ENCODE measurements at regions of chr17 and their contacts with region 1.

Region 1: DNA sequence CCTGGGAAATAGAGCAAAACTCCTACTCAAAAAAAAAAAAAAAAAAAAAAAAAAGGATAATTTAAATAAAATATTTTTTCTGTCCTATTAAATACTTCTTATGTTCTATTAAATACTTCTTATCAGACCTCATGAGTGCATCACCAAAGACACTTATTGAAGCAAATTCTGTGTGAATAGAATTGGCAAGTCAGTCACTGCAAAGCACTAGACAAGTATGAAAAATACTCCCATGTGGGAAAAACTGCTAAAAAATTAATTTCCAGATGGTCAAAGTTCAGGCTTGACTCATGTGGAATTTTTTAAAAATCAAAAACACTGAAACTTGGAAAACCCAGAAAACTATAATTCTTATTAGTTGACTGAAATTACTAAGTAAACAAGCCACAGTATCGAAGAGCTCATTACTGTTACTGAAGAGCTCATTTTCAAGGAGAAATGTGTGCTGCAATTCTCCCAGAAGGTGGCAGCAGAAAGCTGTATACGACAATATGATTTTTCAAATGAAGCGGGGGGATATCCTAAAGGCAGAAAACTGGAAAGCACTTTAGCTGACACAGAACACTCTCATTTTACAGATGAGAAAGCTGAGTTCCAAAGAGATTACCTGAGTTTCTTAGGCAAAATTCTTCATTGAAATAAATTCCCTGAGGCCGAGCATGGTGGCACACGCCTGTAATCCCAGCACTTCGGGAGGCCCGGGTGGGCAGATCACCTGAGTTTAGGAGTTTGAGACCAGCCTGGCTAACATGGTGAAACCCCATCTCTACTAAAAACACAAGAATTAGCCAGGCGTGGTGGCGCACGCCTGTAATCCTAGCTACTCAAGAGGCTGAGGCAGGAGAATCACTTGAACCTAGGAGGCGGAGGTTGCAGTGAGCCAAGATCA is 15.9 kb upstream of the FBXO47 start:
- DNase-seq: peak; percentile 34 to 51
- H3K4me3 ChIP-seq: no peak overlapping the region
- H3K27ac ChIP-seq: no peak overlapping the region
- H3K4me1 ChIP-seq: no peaks in the 10 kb centered on the region
- H3K27me3 ChIP-seq: no peaks in the 10 kb centered on the region
- CTCF ChIP-seq: peak; percentile 86

Region 2: GRCh38 chr17:39057701-39058206 is 74.7 kb after region 1 on chr17:
- CTCF ChIA-PET with region 1: interaction called, 7 read pairs
- POLR2A ChIA-PET with region 1: no interaction called
- intact Hi-C with region 1: loop called (anchors 5 kb)
- DNase-seq: no peak
- H3K4me3 ChIP-seq: peak overlapping the region; percentile 73
- H3K27ac ChIP-seq: no peak overlapping the region
- H3K4me1 ChIP-seq: peaks cover 12% of the 10 kb centered on the region
- H3K27me3 ChIP-seq: no peaks in the 10 kb centered on the region
- CTCF ChIP-seq: no peak